B cell (primary cell): ENCODE measurements at regions of chr19 and their contacts with region 1.

Region 1: GRCh38 chr19:51473009-51473707 is 5.2 kb upstream of the CEACAM18 start:
- DNase-seq: peak; percentile 86
- ATAC-seq: peak; percentile 66
- H3K4me3 ChIP-seq: no peak overlapping the region
- H3K4me3 Mint-ChIP-seq: no peak overlapping the region
- H3K27ac ChIP-seq: no peak overlapping the region
- H3K27ac Mint-ChIP-seq: no peak overlapping the region
- H3K4me1 ChIP-seq: peaks cover 4 to 5% of the 10 kb centered on the region in 2 donors
- H3K4me1 Mint-ChIP-seq: peaks cover 4% of the 10 kb centered on the region
- H3K27me3 ChIP-seq: peaks cover 0 to 16% (median 1%) of the 10 kb centered on the region in 4 experiments
- H3K27me3 Mint-ChIP-seq: peaks cover 25% of the 10 kb centered on the region
- CTCF ChIP-seq: peak; percentile 98

Region 2: GRCh38 chr19:51367565-51368365 is 105.4 kb before region 1 on chr19:
- CTCF ChIA-PET with region 1: interaction called, 3 read pairs
- POLR2A ChIA-PET with region 1: no interaction called
- intact Hi-C with region 1: loop called (anchors 1 kb)
- DNase-seq: peak; percentile 98
- ATAC-seq: peak; percentile 85
- H3K4me3 ChIP-seq: peak overlapping the region; percentile 73 to 94 (median 78)
- H3K4me3 Mint-ChIP-seq: peak overlapping the region; percentile 97
- H3K27ac ChIP-seq: peak overlapping the region; percentile 80 to 87
- H3K27ac Mint-ChIP-seq: peak overlapping the region; percentile 95
- H3K4me1 ChIP-seq: peaks cover 5 to 36% of the 10 kb centered on the region in 2 donors
- H3K4me1 Mint-ChIP-seq: peaks cover 37% of the 10 kb centered on the region
- H3K27me3 ChIP-seq: no peaks in the 10 kb centered on the region
- H3K27me3 Mint-ChIP-seq: no peaks in the 10 kb centered on the region
- CTCF ChIP-seq: no peak

Region 3: GRCh38 chr19:51507640-51508058 is 34.5 kb after region 1 on chr19:
- CTCF ChIA-PET with region 1: interaction called, 12 read pairs
- POLR2A ChIA-PET with region 1: no interaction called
- intact Hi-C with region 1: no loop called
- DNase-seq: no peak
- ATAC-seq: no peak
- H3K4me3 ChIP-seq: no peak overlapping the region
- H3K4me3 Mint-ChIP-seq: no peak overlapping the region
- H3K27ac ChIP-seq: no peak overlapping the region
- H3K27ac Mint-ChIP-seq: no peak overlapping the region
- H3K4me1 ChIP-seq: no peaks in the 10 kb centered on the region
- H3K4me1 Mint-ChIP-seq: peaks cover 3% of the 10 kb centered on the region
- H3K27me3 ChIP-seq: peaks cover 0 to 3% (median 0%) of the 10 kb centered on the region in 4 experiments
- H3K27me3 Mint-ChIP-seq: peaks cover 5% of the 10 kb centered on the region
- CTCF ChIP-seq: no peak

Region 4: GRCh38 chr19:51546650-51547396 is 73.7 kb after region 1 on chr19:
- CTCF ChIA-PET with region 1: interaction called, 24 read pairs
- POLR2A ChIA-PET with region 1: no interaction called
- intact Hi-C with region 1: no loop called
- DNase-seq: no peak
- ATAC-seq: no peak
- H3K4me3 ChIP-seq: peak overlapping the region in 3 of 5 experiments; percentile 7 to 47 (median 11)
- H3K4me3 Mint-ChIP-seq: peak overlapping the region; percentile 83
- H3K27ac ChIP-seq: peak overlapping the region; percentile 43 to 77
- H3K27ac Mint-ChIP-seq: peak overlapping the region; percentile 97
- H3K4me1 ChIP-seq: peaks cover 49 to 77% of the 10 kb centered on the region in 2 donors
- H3K4me1 Mint-ChIP-seq: peaks cover 85% of the 10 kb centered on the region
- H3K27me3 ChIP-seq: no peaks in the 10 kb centered on the region
- H3K27me3 Mint-ChIP-seq: no peaks in the 10 kb centered on the region
- CTCF ChIP-seq: no peak

Region 5: DNA sequence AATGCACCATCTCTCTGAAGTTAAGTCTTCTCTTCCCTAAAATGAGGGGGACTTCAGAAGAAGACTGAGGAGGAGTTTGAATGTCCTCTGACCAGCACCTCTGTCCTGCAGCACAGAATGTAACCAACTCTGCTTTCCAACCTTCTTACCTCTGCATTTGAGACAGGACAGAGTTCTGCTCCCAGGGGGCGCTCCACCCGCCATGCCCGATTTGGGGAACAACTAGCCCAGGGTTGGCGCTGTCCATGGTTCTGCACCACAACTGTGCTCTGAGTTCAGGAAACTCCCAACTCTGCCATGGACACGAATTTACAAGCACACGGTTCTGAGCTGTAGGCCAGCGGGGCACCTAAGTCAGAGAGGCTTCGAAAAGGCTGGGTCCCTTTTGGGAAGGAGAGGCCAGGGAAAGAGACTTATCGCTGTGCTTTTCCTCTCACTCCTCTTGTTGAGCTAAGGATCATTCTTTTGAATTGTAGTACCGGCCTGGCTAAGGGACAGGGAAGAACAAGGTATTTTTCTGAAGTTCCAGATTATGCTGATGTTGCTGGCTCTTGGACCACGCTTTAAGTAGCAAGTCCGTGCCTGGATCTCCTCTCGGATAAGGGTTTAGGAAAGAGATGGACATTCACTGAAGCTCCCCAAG is 134.9 kb after region 1 on chr19:
- CTCF ChIA-PET with region 1: interaction called, 10 read pairs
- POLR2A ChIA-PET with region 1: no interaction called
- intact Hi-C with region 1: no loop called
- DNase-seq: peak; percentile 85
- ATAC-seq: no peak
- H3K4me3 ChIP-seq: no peak overlapping the region
- H3K4me3 Mint-ChIP-seq: peak overlapping the region; percentile 82
- H3K27ac ChIP-seq: peak overlapping the region in 1 of 2 donors; percentile 82
- H3K27ac Mint-ChIP-seq: peak overlapping the region; percentile 95
- H3K4me1 ChIP-seq: peaks cover 36 to 37% of the 10 kb centered on the region in 2 donors
- H3K4me1 Mint-ChIP-seq: peaks cover 57% of the 10 kb centered on the region
- H3K27me3 ChIP-seq: no peaks in the 10 kb centered on the region
- H3K27me3 Mint-ChIP-seq: no peaks in the 10 kb centered on the region
- CTCF ChIP-seq: peak; percentile 55

Region 6: DNA sequence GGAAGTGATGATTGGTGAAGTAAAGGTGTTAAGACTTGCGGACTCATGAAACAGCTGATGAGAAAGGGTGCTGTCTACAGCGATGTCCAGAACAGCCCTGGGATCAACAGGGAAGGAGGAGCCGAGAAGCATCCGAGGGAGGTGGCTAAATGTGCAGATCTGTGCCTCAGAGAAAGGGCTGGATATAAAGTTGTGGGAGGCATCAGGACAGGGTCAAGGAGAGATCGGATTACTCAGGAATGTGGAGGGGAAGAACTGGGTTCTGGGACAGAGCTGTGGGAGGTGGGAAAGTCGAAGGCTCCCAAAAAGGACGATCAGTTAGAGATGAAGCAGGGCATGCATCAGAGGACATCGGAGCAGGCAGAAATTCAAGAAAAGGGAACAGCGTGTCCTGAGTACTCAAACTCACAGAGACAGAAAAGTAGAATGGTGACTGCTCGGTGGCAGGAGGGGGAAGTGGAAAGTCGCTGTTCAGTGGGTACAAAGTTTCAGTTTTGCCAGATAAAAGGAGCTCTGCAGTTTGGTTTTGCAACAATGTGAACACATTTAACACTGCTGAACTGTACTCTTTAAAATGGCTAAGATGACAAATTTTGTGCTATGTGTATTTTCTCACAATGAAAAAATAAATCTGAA is 171.6 kb after region 1 on chr19:
- CTCF ChIA-PET with region 1: interaction called, 21 read pairs
- POLR2A ChIA-PET with region 1: no interaction called
- intact Hi-C with region 1: no loop called
- DNase-seq: peak; percentile 68
- ATAC-seq: peak; percentile 55
- H3K4me3 ChIP-seq: peak overlapping the region in 4 of 5 experiments; percentile 13 to 61 (median 44)
- H3K4me3 Mint-ChIP-seq: peak overlapping the region; percentile 88
- H3K27ac ChIP-seq: peak overlapping the region; percentile 52 to 53
- H3K27ac Mint-ChIP-seq: peak overlapping the region; percentile 90
- H3K4me1 ChIP-seq: peaks cover 11 to 61% of the 10 kb centered on the region in 2 donors
- H3K4me1 Mint-ChIP-seq: peaks cover 62% of the 10 kb centered on the region
- H3K27me3 ChIP-seq: no peaks in the 10 kb centered on the region
- H3K27me3 Mint-ChIP-seq: no peaks in the 10 kb centered on the region
- CTCF ChIP-seq: no peak

Region 7: GRCh38 chr19:51676566-51677083 is 203.5 kb after region 1 on chr19:
- CTCF ChIA-PET with region 1: interaction called, 11 read pairs
- POLR2A ChIA-PET with region 1: no interaction called
- intact Hi-C with region 1: no loop called
- DNase-seq: no peak
- ATAC-seq: no peak
- H3K4me3 ChIP-seq: no peak overlapping the region
- H3K4me3 Mint-ChIP-seq: no peak overlapping the region
- H3K27ac ChIP-seq: no peak overlapping the region
- H3K27ac Mint-ChIP-seq: no peak overlapping the region
- H3K4me1 ChIP-seq: peaks cover 0 to 7% of the 10 kb centered on the region in 2 donors
- H3K4me1 Mint-ChIP-seq: peaks cover 4% of the 10 kb centered on the region
- H3K27me3 ChIP-seq: peaks cover 0 to 24% (median 13%) of the 10 kb centered on the region in 4 experiments
- H3K27me3 Mint-ChIP-seq: peaks cover 50% of the 10 kb centered on the region
- CTCF ChIP-seq: no peak